ENCODE measurements at regions of chr14 and their contacts with region 1.

Region 1: GRCh38 chr14:73613046-73613383 is 698 bp downstream of the ACOT6 start:
- DNase-seq: no peak
- ATAC-seq: peak; percentile 9
- H3K4me3 Mint-ChIP-seq: peak overlapping the region; percentile 78
- H3K27ac Mint-ChIP-seq: peak overlapping the region; percentile 72
- H3K4me1 Mint-ChIP-seq: peaks cover 2% of the 10 kb centered on the region
- H3K27me3 Mint-ChIP-seq: no peaks in the 10 kb centered on the region
- CTCF ChIP-seq: no peak

Region 2: GRCh38 chr14:73503648-73504047 is 109.4 kb before region 1 on chr14:
- CTCF ChIA-PET with region 1: interaction called, 11 read pairs
- POLR2A ChIA-PET with region 1: no interaction called
- intact Hi-C with region 1: no loop called
- DNase-seq: peak; percentile 22
- ATAC-seq: peak; percentile 81
- H3K4me3 Mint-ChIP-seq: no peak overlapping the region
- H3K27ac Mint-ChIP-seq: no peak overlapping the region
- H3K4me1 Mint-ChIP-seq: no peaks in the 10 kb centered on the region
- H3K27me3 Mint-ChIP-seq: no peaks in the 10 kb centered on the region
- CTCF ChIP-seq: no peak

Measured in activated CD8-positive, alpha-beta T cell treated with anti-CD3 and anti-CD28 coated beads for 36 hours (primary cell).